ENCODE measurements at regions of chr12 and their contacts with region 1.

Region 1: GRCh38 chr12:29782285-29782870 is 1.4 kb downstream of the TMTC1 start:
- DNase-seq: no peak
- ATAC-seq: peak; percentile 10; the same call in 1 of the 3 replicates
- H3K4me3 ChIP-seq: no peak overlapping the region
- H3K27ac ChIP-seq: no peak overlapping the region
- H3K4me1 ChIP-seq: 0 out of 2 replicates have a peak, but pooled peaks cover 10% of the 10 kb centered on the region
- H3K27me3 ChIP-seq: peaks cover 0 to 41% of the 10 kb centered on the region in 2 experiments; a peak in 3 of 5 replicates
- CTCF ChIP-seq: no peak
- EP300 ChIP-seq: no peak
- POLR2A ChIP-seq: no peak
- RAD21 ChIP-seq: no peak

Region 2: GRCh38 chr12:29640589-29641345 is 141.6 kb before region 1 on chr12:
- CTCF ChIA-PET with region 1: no interaction called
- POLR2A ChIA-PET with region 1: no interaction called
- in situ Hi-C with region 1: no loop called
- intact Hi-C with region 1: loop called (anchors 10 kb)
- DNase-seq: peak; percentile 63
- ATAC-seq: peak; percentile 93
- H3K4me3 ChIP-seq: peak overlapping the region; percentile 60 to 72 (median 61); a peak in 5 of 6 replicates
- H3K27ac ChIP-seq: peak overlapping the region; percentile 85
- H3K4me1 ChIP-seq: peaks cover 8% of the 10 kb centered on the region
- H3K27me3 ChIP-seq: no peaks in the 10 kb centered on the region
- CTCF ChIP-seq: peak; percentile 54
- EP300 ChIP-seq: no peak
- POLR2A ChIP-seq: peak; percentile 36 to 51
- RAD21 ChIP-seq: no peak

Region 3: DNA sequence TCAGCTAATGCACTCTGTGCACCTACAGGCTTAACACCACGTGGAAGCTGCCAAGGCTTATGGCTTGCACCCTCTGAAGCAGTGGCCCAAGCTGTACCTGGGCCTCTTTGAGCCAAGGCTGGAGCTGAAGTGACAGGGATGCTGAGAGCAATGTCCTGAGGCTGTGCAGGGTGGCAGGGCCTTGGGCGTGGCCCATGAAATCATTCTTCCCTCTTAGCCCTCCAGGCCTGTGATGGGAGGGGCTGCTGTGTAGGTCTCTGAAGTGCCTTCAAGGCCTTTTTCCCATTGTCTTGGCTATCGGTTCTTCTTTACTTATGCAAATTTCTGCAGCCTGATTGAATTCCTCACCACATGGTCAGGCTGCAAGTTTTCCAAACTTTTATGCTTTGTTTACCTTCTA is 48.8 kb after region 1 on chr12:
- CTCF ChIA-PET with region 1: no interaction called
- POLR2A ChIA-PET with region 1: no interaction called
- in situ Hi-C with region 1: no loop called
- intact Hi-C with region 1: no loop called
- DNase-seq: no peak
- ATAC-seq: no peak
- H3K4me3 ChIP-seq: no peak overlapping the region
- H3K27ac ChIP-seq: no peak overlapping the region
- H3K4me1 ChIP-seq: no peaks in the 10 kb centered on the region
- H3K27me3 ChIP-seq: no peaks in the 10 kb centered on the region
- CTCF ChIP-seq: no peak
- EP300 ChIP-seq: no peak
- POLR2A ChIP-seq: no peak
- RAD21 ChIP-seq: no peak